Activated CD4-positive, alpha-beta T cell treated with anti-CD3 and anti-CD28 coated beads for 36 hours (primary cell): ENCODE measurements at regions of chr5 and their contacts with region 1.

Region 1: DNA sequence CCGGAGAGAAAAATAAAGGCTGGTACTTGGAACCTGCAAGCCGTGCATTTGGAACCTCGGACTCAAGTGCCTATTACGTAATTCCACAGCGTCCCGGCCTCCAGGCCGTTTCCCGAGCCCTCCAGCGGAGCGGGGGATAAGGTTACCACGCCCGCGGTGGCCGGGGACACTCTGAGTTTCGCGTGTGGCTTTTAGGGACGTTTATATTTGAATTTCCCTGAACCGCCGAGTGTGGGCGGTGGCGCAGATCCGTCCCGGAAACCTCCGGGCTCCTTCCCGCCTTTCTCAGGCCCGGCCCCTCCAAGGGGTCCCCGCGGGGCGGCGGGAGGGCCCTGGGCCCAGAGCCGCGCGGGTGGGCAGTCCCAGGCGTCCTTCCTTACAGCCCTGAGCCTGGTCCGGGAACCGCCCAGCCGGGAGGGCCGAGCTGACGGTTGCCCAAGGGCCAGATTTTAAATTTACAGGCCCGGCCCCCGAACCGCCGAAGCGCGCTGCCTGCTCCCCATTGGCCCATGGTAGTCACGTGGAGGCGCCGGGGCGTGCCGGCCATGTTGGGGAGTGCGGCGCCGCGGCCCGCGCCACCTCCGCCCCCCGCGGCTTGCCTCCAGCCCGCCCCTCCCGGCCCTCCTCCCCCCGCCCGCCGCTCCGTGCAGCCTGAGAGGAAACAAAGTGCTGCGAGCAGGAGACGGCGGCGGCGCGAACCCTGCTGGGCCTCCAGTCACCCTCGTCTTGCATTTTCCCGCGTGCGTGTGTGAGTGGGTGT is at the start of gene LMNB1:
- DNase-seq: peak; percentile 97
- ATAC-seq: peak; percentile 70
- H3K4me3 Mint-ChIP-seq: peak within 1 kb of the TSS; percentile 97
- H3K27ac Mint-ChIP-seq: peak within 1 kb of the TSS; percentile 99
- H3K4me1 Mint-ChIP-seq: peaks cover 32% of the 10 kb centered on the region
- H3K27me3 Mint-ChIP-seq: no peaks in the 10 kb centered on the region
- total RNA-seq, gene LMNB1: 209 to 240 TPM

Region 2: DNA sequence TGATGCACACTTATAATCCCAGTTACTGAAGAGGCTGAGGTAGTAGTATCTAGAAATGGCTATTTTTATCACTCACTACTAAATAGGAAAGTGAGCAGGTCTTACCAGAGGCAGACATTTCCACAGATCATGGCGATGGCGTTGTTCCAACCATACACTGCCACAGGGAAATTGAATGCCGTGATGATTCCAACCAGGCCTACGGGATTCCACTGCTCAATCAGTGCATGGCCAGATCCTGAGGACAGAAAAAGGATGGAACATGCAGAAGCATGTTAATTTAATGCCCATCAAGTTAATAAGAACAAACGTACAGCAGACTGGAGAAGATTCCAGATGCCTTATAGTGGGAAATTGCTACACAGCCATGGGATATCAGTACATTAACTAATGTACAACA is 199.7 kb before region 1 on chr5:
- CTCF ChIA-PET with region 1: no interaction called
- POLR2A ChIA-PET with region 1: no interaction called
- intact Hi-C with region 1: no loop called
- DNase-seq: no peak
- ATAC-seq: no peak
- H3K4me3 Mint-ChIP-seq: no peak overlapping the region
- H3K27ac Mint-ChIP-seq: no peak overlapping the region
- H3K4me1 Mint-ChIP-seq: no peaks in the 10 kb centered on the region
- H3K27me3 Mint-ChIP-seq: no peaks in the 10 kb centered on the region

Region 3: GRCh38 chr5:126600631-126601511 is 175.8 kb before region 1 on chr5 and contains the start of gene PHAX:
- CTCF ChIA-PET with region 1: no interaction called
- POLR2A ChIA-PET with region 1: no interaction called
- intact Hi-C with region 1: loop called (anchors 1 kb)
- DNase-seq: peak; percentile 87
- ATAC-seq: peak; percentile 94
- H3K4me3 Mint-ChIP-seq: peak within 1 kb of the TSS; percentile 97
- H3K27ac Mint-ChIP-seq: peak within 1 kb of the TSS; percentile 99
- H3K4me1 Mint-ChIP-seq: peaks cover 38% of the 10 kb centered on the region
- H3K27me3 Mint-ChIP-seq: no peaks in the 10 kb centered on the region
- total RNA-seq, gene PHAX: 41.4 to 49.1 TPM

Region 4: DNA sequence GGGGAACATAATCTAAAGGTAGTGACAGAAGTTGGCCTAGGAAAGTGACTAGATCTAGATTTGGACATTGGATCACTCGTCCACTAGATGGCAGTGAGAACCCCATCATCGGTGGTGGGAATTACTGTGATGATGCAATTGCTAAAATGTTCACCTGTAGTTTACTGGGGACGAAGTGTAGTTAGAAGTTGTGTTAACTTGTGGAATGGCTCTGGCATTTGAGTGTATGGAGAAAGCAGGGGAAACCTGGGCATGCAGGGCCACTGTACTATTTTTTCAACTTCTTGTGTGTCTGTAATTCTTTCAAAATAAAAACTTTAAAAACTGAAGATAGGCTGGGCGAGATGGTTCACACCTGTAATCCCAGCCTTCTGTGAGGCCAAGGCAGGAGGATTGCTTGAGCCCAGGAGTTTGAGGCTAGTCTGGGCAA is 100.5 kb before region 1 on chr5:
- CTCF ChIA-PET with region 1: interaction called, 163 read pairs
- POLR2A ChIA-PET with region 1: interaction called, 11 read pairs
- intact Hi-C with region 1: loop called (anchors 1 kb)
- DNase-seq: peak; percentile 78
- ATAC-seq: peak; percentile 87
- H3K4me3 Mint-ChIP-seq: no peak overlapping the region
- H3K27ac Mint-ChIP-seq: peak overlapping the region; percentile 63
- H3K4me1 Mint-ChIP-seq: peaks cover 3% of the 10 kb centered on the region
- H3K27me3 Mint-ChIP-seq: no peaks in the 10 kb centered on the region

Region 5: GRCh38 chr5:126736141-126736540 is 40.5 kb before region 1 on chr5:
- CTCF ChIA-PET with region 1: interaction called, 4 read pairs
- POLR2A ChIA-PET with region 1: interaction called, 11 read pairs
- intact Hi-C with region 1: loop called in 1 of 2 experiments (anchors 5 kb)
- DNase-seq: no peak
- ATAC-seq: no peak
- H3K4me3 Mint-ChIP-seq: no peak overlapping the region
- H3K27ac Mint-ChIP-seq: no peak overlapping the region
- H3K4me1 Mint-ChIP-seq: peaks cover 3% of the 10 kb centered on the region
- H3K27me3 Mint-ChIP-seq: no peaks in the 10 kb centered on the region

Region 6: GRCh38 chr5:126757713-126758357 is 18.8 kb before region 1 on chr5:
- CTCF ChIA-PET with region 1: interaction called, 4 read pairs
- POLR2A ChIA-PET with region 1: interaction called, 9 read pairs
- intact Hi-C with region 1: loop called (anchors 1 kb)
- DNase-seq: no peak
- ATAC-seq: no peak
- H3K4me3 Mint-ChIP-seq: peak overlapping the region; percentile 24
- H3K27ac Mint-ChIP-seq: peak overlapping the region; percentile 63
- H3K4me1 Mint-ChIP-seq: peaks cover 48% of the 10 kb centered on the region
- H3K27me3 Mint-ChIP-seq: no peaks in the 10 kb centered on the region

Region 7: GRCh38 chr5:127313847-127314473 is 537.3 kb after region 1 on chr5:
- CTCF ChIA-PET with region 1: no interaction called
- POLR2A ChIA-PET with region 1: no interaction called
- intact Hi-C with region 1: loop called in 1 of 2 experiments (anchors 5 kb)
- DNase-seq: peak; percentile 83
- ATAC-seq: peak; percentile 64
- H3K4me3 Mint-ChIP-seq: no peak overlapping the region
- H3K27ac Mint-ChIP-seq: no peak overlapping the region
- H3K4me1 Mint-ChIP-seq: peaks cover 2% of the 10 kb centered on the region
- H3K27me3 Mint-ChIP-seq: peaks cover 9% of the 10 kb centered on the region

Region 8: DNA sequence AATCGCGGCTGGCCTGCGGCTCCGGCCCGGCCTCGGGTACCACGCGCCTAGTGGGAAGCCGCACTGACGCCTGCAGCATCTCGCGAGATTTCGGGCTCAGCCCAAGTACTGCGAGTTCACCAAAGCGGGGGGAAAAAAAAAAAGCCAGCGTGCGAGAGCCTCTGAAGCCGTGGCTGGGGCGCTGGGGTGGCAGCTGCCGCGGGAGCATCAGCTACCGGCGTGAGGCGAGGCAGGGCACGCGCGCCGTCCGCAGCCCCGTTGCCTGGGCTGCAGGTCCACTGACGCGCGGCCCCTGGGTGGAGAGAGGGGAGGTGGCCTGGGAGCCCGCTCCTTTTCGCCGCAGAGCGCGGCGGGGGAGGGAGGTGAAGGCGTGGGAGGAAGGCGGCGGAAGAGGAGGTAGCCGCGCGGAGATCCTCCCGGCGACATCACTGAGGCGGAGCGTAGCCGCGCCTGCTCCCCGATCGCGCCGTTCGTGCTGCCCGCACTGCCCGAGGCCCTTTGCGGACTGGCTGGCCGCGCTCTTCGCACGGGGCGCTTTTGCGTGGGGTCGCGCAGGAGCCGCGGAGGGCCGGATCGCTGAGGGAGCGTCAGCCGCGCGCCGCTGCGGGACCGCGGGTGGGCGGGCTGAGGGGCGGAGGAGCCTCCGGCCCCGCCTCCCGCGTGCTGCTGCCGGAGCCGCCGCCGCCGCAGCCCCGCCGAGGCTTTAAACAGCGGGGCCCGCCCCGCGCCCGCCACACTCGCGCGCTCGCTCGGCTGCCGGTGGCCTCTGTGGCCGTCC is 1306.5 kb after region 1 on chr5 and contains the start of gene SLC12A2:
- CTCF ChIA-PET with region 1: no interaction called
- POLR2A ChIA-PET with region 1: no interaction called
- intact Hi-C with region 1: loop called in 1 of 2 experiments (anchors 1 kb)
- DNase-seq: peak; percentile 94
- ATAC-seq: peak; percentile 68
- H3K4me3 Mint-ChIP-seq: peak within 1 kb of the TSS; percentile 91
- H3K27ac Mint-ChIP-seq: peak within 1 kb of the TSS; percentile 94
- H3K4me1 Mint-ChIP-seq: peaks cover 50% of the 10 kb centered on the region
- H3K27me3 Mint-ChIP-seq: no peaks in the 10 kb centered on the region
- total RNA-seq, gene SLC12A2: 8.0 to 13.1 TPM